Psoas muscle (tissue), 8 donors: ENCODE measurements at regions of chr1 and their contacts with region 1.

Region 1: GRCh38 chr1:17335821-17336710 is 28.1 kb downstream of the PADI4 start:
- DNase-seq: peak; percentile 67 to 79
- ATAC-seq: peak in 3 of 4 donors; percentile 43 to 65 (median 64)
- H3K4me3 ChIP-seq: no peak overlapping the region
- H3K27ac ChIP-seq: no peak overlapping the region
- H3K4me1 ChIP-seq: no peaks in the 10 kb centered on the region
- H3K27me3 ChIP-seq: peaks cover 0 to 20% (median 6%) of the 10 kb centered on the region in 3 donors
- CTCF ChIP-seq: peak; percentile 76

Region 2: DNA sequence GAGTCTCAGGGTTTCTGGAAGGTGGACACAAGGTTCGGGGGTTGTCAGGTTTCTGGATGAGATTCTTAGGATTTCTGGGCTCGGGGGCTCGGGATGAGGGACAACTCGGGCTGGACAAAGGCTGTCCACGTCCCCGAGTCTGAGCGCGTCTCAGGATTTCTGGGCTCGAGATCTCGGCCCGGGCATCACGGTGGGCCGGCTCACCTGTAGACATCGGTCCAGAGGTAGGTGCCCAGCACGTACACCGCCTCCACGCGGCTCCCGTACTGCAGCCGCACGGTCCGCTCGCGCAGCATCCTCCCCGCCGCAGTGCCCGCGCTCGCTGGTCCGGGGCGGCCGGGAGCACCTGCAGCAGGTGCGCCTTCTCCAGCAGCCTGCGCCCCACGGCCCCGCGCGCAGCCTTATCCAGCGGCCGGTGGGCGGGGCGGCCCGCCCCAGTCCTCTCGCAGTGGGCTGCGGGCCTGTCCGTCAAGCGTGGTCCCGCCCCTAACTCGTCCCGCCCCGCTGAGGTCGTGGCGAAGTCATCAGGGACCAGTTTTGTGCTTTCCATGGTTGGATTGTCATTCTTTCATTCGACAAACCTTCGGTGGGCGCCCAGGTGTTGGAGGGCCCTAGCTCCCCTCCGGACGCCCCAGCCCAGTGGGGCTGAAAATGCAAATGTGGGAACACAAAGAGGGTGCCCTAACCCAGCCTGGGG is 216.8 kb before region 1 on chr1 and contains the start of gene PADI2:
- intact Hi-C with region 1: loop called (anchors 2 to 5 kb)
- DNase-seq: peak; percentile 78 to 87
- ATAC-seq: peak; percentile 63 to 69 (median 66)
- H3K4me3 ChIP-seq: peak within 1 kb of the TSS; percentile 88
- H3K27ac ChIP-seq: peak within 1 kb of the TSS; percentile 92
- H3K4me1 ChIP-seq: peaks cover 52% of the 10 kb centered on the region
- H3K27me3 ChIP-seq: no peaks in the 10 kb centered on the region
- CTCF ChIP-seq: no peak
- total RNA-seq, gene PADI2: 198 to 956 (median 431) TPM

Region 3: GRCh38 chr1:17125756-17126237 is 210.3 kb before region 1 on chr1:
- intact Hi-C with region 1: loop called (anchors 2 to 5 kb)
- DNase-seq: peak; percentile 88 to 93
- ATAC-seq: peak; percentile 49 to 73 (median 60)
- H3K4me3 ChIP-seq: no peak overlapping the region
- H3K27ac ChIP-seq: no peak overlapping the region
- H3K4me1 ChIP-seq: peaks cover 21% of the 10 kb centered on the region
- H3K27me3 ChIP-seq: no peaks in the 10 kb centered on the region
- CTCF ChIP-seq: peak; percentile 95

Region 4: GRCh38 chr1:17265162-17265561 is 70.9 kb before region 1 on chr1:
- intact Hi-C with region 1: no loop called
- DNase-seq: no peak
- ATAC-seq: no peak
- H3K4me3 ChIP-seq: no peak overlapping the region
- H3K27ac ChIP-seq: no peak overlapping the region
- H3K4me1 ChIP-seq: no peaks in the 10 kb centered on the region
- H3K27me3 ChIP-seq: peaks cover 0 to 8% (median 0%) of the 10 kb centered on the region in 3 donors
- CTCF ChIP-seq: no peak

Region 5: GRCh38 chr1:17276584-17277247 is 59.4 kb before region 1 on chr1:
- intact Hi-C with region 1: no loop called
- DNase-seq: no peak
- ATAC-seq: no peak
- H3K4me3 ChIP-seq: no peak overlapping the region
- H3K27ac ChIP-seq: no peak overlapping the region
- H3K4me1 ChIP-seq: no peaks in the 10 kb centered on the region
- H3K27me3 ChIP-seq: peaks cover 0 to 29% (median 7%) of the 10 kb centered on the region in 3 donors
- CTCF ChIP-seq: no peak

Region 6: GRCh38 chr1:17314491-17315022 is 21.5 kb before region 1 on chr1:
- intact Hi-C with region 1: no loop called
- DNase-seq: no peak
- ATAC-seq: no peak
- H3K4me3 ChIP-seq: no peak overlapping the region
- H3K27ac ChIP-seq: no peak overlapping the region
- H3K4me1 ChIP-seq: no peaks in the 10 kb centered on the region
- H3K27me3 ChIP-seq: peaks cover 0 to 52% (median 6%) of the 10 kb centered on the region in 3 donors
- CTCF ChIP-seq: no peak